PC-3 (cell line): ENCODE measurements at regions of chr11 and their contacts with region 1.

Region 1: GRCh38 chr11:125345421-125346178 is 150.5 kb downstream of the FEZ1 start:
- DNase-seq: peak; percentile 74
- ATAC-seq: peak; percentile 81
- H3K4me3 ChIP-seq: no peak overlapping the region
- H3K27ac ChIP-seq: no peak overlapping the region
- H3K4me1 ChIP-seq: no peaks in the 10 kb centered on the region
- H3K27me3 ChIP-seq: peaks cover 44% of the 10 kb centered on the region
- CTCF ChIP-seq: peak; percentile 96

Region 2: DNA sequence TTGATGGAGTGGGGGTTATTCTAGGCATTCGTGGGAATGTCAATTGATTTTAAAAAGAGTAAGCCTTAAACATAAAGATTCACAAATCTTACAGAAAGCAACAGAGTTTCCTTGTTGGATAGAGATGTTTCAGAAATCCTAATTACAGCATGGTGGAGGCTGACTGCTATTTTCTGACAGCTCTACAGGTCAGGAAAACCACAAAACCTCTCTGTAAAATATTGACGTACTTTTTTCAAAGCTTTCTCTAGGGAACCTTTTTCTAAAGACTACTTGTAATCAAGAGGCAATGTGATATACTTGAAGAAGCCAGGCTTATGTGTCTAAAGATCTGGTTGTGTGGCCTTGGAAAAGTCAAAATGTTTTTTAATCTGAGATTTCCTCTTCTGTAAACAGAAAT is 891.0 kb before region 1 on chr11:
- CTCF ChIA-PET with region 1: no interaction called
- POLR2A ChIA-PET with region 1: no interaction called
- intact Hi-C with region 1: no loop called
- DNase-seq: no peak
- ATAC-seq: no peak
- H3K4me3 ChIP-seq: no peak overlapping the region
- H3K27ac ChIP-seq: no peak overlapping the region
- H3K4me1 ChIP-seq: no peaks in the 10 kb centered on the region
- H3K27me3 ChIP-seq: peaks cover 62% of the 10 kb centered on the region
- CTCF ChIP-seq: no peak

Region 3: DNA sequence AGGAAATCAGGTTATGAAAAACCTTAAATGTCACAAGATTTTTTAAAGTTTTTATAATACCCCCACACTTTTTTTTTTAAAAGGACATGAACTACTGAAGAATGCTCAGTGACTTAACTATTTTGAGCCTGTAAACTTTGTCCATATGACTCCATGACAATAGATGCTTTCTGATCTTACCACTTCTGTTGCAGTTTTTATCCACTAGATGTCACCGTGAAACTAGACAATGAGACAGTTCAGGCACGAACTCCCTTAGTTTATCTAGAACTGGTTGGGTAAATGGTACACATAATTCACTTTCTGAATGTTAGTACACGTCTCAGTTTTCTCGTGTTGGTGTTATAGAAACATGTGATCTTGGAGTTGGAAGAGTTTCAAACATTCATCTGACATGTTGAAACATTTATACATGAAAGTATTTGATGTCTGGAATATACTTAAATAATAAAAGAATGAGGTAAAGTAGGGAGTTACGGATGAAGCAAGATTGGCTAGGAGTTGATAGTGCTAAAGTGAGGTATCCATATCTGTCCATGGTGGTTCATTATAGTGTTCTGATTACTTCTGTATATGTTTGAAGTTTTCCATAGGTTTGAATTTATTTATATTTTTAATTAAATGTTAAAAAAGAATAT is 383.5 kb before region 1 on chr11:
- CTCF ChIA-PET with region 1: no interaction called
- POLR2A ChIA-PET with region 1: no interaction called
- intact Hi-C with region 1: loop called (anchors 1 kb)
- DNase-seq: peak; percentile 91
- ATAC-seq: peak; percentile 98
- H3K4me3 ChIP-seq: no peak overlapping the region
- H3K27ac ChIP-seq: no peak overlapping the region
- H3K4me1 ChIP-seq: no peaks in the 10 kb centered on the region
- H3K27me3 ChIP-seq: no peaks in the 10 kb centered on the region
- CTCF ChIP-seq: peak; percentile 96

Region 4: GRCh38 chr11:125091247-125091876 is 254.2 kb before region 1 on chr11:
- CTCF ChIA-PET with region 1: interaction called, 6 read pairs
- POLR2A ChIA-PET with region 1: no interaction called
- intact Hi-C with region 1: loop called (anchors 1 kb)
- DNase-seq: peak; percentile 62
- ATAC-seq: peak; percentile 82
- H3K4me3 ChIP-seq: no peak overlapping the region
- H3K27ac ChIP-seq: no peak overlapping the region
- H3K4me1 ChIP-seq: peaks cover 8% of the 10 kb centered on the region; the same call in 1 of the 2 replicates
- H3K27me3 ChIP-seq: no peaks in the 10 kb centered on the region
- CTCF ChIP-seq: peak; percentile 89

Region 5: GRCh38 chr11:125164422-125165110 is 181.0 kb before region 1 on chr11 and contains the start of gene PKNOX2:
- CTCF ChIA-PET with region 1: interaction called, 3 read pairs
- POLR2A ChIA-PET with region 1: no interaction called
- intact Hi-C with region 1: loop called (anchors 5 kb)
- DNase-seq: peak; percentile 63
- ATAC-seq: peak; percentile 63
- H3K4me3 ChIP-seq: peak within 1 kb of the TSS; percentile 78
- H3K27ac ChIP-seq: no peak within 1 kb of the TSS
- H3K4me1 ChIP-seq: peaks cover 7% of the 10 kb centered on the region; the same call in 1 of the 2 replicates
- H3K27me3 ChIP-seq: peaks cover 28% of the 10 kb centered on the region
- CTCF ChIP-seq: peak; percentile 54
- total RNA-seq, gene PKNOX2: 0.12 TPM in 1 of 2 replicates, not detected in the other

Region 6: DNA sequence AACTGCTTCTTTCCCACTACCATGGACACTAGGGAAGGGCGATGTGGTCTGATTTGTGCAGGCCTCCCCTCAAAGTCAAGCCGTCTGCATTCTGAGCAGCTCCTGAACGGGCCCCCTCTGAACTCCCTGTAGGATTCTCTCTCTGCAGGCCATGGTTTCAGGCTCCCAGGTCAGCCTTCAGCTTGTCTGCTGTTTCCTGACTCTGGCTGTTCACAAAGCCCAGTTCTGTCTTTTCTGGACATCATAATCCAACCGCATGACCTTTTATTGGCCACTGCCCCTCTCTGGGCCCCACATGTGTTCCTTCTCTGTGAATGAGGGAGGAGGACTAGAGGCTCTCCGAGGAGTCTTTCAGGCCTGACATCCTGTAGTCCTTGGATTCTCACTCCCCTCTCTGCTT is 10.5 kb before region 1 on chr11:
- CTCF ChIA-PET with region 1: no interaction called
- POLR2A ChIA-PET with region 1: no interaction called
- intact Hi-C with region 1: no loop called
- DNase-seq: no peak
- ATAC-seq: no peak
- H3K4me3 ChIP-seq: no peak overlapping the region
- H3K27ac ChIP-seq: no peak overlapping the region
- H3K4me1 ChIP-seq: no peaks in the 10 kb centered on the region
- H3K27me3 ChIP-seq: peaks cover 82% of the 10 kb centered on the region
- CTCF ChIP-seq: no peak

Region 7: DNA sequence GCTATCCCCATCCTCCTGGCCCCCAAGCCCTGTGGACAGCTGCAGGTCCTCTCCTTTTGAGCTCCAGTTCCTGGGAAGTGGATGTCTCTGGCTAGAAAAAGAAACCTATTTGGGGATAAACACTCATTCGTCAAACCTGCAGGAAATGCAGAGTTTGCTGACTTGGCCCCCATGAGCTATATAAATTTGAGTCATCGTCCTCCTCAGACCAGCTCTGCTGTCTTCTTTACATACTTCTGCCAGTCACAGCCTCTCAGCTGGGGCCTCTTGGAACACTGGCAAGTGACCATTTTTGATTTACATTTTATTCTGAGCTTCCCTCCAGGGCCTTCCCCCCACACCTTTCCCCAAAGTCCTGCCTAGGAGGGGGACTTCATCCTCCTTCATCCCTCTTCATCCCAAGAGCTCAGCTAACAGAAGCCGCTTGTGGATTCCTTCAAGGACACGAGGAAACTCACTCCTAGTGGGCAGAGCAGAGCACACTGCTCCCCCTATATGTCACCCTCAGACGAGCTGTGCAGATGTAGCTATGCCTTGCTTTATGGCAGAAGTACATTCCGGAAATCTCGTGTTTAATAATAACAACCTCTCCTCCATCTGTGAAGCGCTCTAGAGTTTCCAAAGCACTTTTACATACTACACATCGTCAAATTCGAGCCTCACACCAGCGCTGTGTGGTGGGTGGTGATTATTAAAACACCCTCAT is 18.7 kb after region 1 on chr11:
- CTCF ChIA-PET with region 1: interaction called, 10 read pairs
- POLR2A ChIA-PET with region 1: no interaction called
- intact Hi-C with region 1: no loop called
- DNase-seq: peak; percentile 70
- ATAC-seq: peak; percentile 95
- H3K4me3 ChIP-seq: no peak overlapping the region
- H3K27ac ChIP-seq: no peak overlapping the region
- H3K4me1 ChIP-seq: peaks cover 14% of the 10 kb centered on the region
- H3K27me3 ChIP-seq: peaks cover 13% of the 10 kb centered on the region; the same call in 1 of the 2 replicates
- CTCF ChIP-seq: peak; percentile 28; the same call in 1 of the 2 replicates

Region 8: GRCh38 chr11:125404776-125405435 is 59.3 kb after region 1 on chr11:
- CTCF ChIA-PET with region 1: no interaction called
- POLR2A ChIA-PET with region 1: no interaction called
- intact Hi-C with region 1: loop called (anchors 5 kb)
- DNase-seq: peak; percentile 50
- ATAC-seq: peak; percentile 95
- H3K4me3 ChIP-seq: no peak overlapping the region
- H3K27ac ChIP-seq: no peak overlapping the region
- H3K4me1 ChIP-seq: no peaks in the 10 kb centered on the region
- H3K27me3 ChIP-seq: peaks cover 96% of the 10 kb centered on the region
- CTCF ChIP-seq: peak; percentile 88

Region 9: GRCh38 chr11:125874556-125875124 is 529.0 kb after region 1 on chr11:
- CTCF ChIA-PET with region 1: no interaction called
- POLR2A ChIA-PET with region 1: no interaction called
- intact Hi-C with region 1: loop called (anchors 2 kb)
- DNase-seq: peak; percentile 90
- ATAC-seq: peak; percentile 99
- H3K4me3 ChIP-seq: peak overlapping the region; percentile 51
- H3K27ac ChIP-seq: no peak overlapping the region
- H3K4me1 ChIP-seq: 0 out of 2 replicates have a peak, but pooled peaks cover 3% of the 10 kb centered on the region
- H3K27me3 ChIP-seq: no peaks in the 10 kb centered on the region
- CTCF ChIP-seq: peak; percentile 94